ENCODE measurements at regions of chr19 and their contacts with region 1.

Region 1: DNA sequence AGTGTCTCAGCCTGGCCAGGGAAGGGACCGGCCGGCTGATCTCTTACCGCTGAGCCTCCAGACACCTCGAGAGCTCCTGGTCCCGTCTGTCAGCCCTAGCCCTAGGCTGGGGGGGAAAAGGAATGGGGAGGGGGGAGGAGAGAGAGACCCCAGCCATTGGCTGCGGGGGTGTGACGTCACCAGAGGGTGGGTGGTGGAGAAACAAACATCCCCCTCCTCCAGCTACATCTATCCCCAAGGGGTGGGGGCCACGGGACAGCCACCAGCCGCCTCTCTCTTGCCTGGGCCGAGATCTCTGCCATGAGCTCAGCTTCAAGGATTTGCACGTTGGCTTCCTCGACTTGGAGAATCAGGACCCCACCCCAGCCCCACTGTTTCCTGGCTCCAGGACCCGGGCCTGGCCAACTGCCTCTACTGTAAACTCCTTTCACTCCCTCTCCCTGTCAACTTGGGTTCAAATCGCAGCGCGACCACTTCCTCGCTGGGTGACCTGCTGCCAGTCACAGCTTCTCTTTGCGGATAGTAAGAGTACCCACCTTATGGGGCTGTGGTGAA is at the start of gene PRX:
- DNase-seq: no peak
- ATAC-seq: no peak
- H3K4me3 ChIP-seq: no peak within 1 kb of the TSS
- H3K4me3 Mint-ChIP-seq: no peak within 1 kb of the TSS
- H3K27ac ChIP-seq: no peak within 1 kb of the TSS
- H3K27ac Mint-ChIP-seq: no peak within 1 kb of the TSS
- H3K4me1 ChIP-seq: peaks cover 0 to 22% of the 10 kb centered on the region in 2 experiments
- H3K4me1 Mint-ChIP-seq: peaks cover 13 to 22% (median 14%) of the 10 kb centered on the region in 3 donors
- H3K27me3 ChIP-seq: peaks cover 0 to 46% of the 10 kb centered on the region in 2 experiments
- H3K27me3 Mint-ChIP-seq: peaks cover 0 to 2% of the 10 kb centered on the region in 2 donors
- total RNA-seq, gene PRX: 2.0 to 4.4 (median 2.8) TPM

Region 2: DNA sequence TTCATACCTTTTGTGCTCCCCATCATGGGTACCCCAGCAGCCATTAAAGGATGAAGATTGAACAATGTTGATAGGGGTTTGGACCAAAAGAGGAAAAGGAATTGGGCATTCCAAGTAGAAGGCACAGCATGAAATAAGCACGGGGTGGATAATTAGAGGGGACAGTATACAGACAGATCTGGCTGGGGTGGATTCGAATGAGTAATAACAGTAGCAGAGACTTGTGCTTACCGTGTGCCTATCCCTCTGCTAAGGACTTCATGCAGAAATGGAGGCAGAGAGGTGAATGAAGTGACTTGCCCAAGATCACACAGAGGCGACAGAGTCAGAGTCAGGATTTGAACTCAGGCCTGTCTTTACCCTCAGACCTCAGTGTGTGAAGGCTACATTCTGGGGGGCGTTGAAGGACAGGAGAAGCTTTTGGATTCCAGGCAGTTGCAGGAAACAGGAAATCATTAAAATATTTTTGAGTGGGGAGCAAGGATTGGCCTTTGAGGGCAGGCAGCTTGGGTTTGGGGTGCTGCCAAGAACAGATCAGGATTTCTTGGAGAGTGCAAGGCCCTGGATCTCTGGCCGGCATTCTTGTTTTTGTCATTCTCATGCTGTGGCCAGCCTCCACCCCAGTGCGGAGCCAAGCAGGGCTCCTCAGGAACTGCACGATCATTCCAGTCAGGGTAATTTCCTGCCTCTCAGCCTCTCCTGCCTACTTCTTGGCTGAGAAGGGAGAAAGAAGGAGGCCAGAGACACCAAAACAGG is 1041.1 kb before region 1 on chr19:
- CTCF ChIA-PET with region 1: no interaction called
- POLR2A ChIA-PET with region 1: interaction called in 1 of 2 experiments, 11 read pairs
- DNase-seq: no peak
- ATAC-seq: no peak
- H3K4me3 ChIP-seq: no peak overlapping the region
- H3K4me3 Mint-ChIP-seq: no peak overlapping the region
- H3K27ac ChIP-seq: no peak overlapping the region
- H3K27ac Mint-ChIP-seq: peak overlapping the region in 1 of 2 donors; percentile 22
- H3K4me1 ChIP-seq: no peaks in the 10 kb centered on the region
- H3K4me1 Mint-ChIP-seq: no peaks in the 10 kb centered on the region
- H3K27me3 ChIP-seq: no peaks in the 10 kb centered on the region
- H3K27me3 Mint-ChIP-seq: no peaks in the 10 kb centered on the region